Heart left ventricle (tissue), 16 donors: ENCODE measurements at regions of chr11 and their contacts with region 1.

Region 1: GRCh38 chr11:76670485-76671236 is at the start of gene LRRC32:
- DNase-seq: peak; percentile 78 to 88 (median 84)
- ATAC-seq: peak; percentile 27 to 69 (median 60)
- H3K4me3 ChIP-seq: peak within 1 kb of the TSS; percentile 49 to 87 (median 76)
- H3K27ac ChIP-seq: peak within 1 kb of the TSS; percentile 78 to 95 (median 90)
- H3K4me1 ChIP-seq: peaks cover 0 to 61% (median 41%) of the 10 kb centered on the region in 12 donors
- H3K27me3 ChIP-seq: peaks cover 0 to 12% (median 0%) of the 10 kb centered on the region in 9 donors
- CTCF ChIP-seq: peak in 7 of 12 donors; percentile 8 to 32 (median 17)
- POLR2A ChIP-seq: peak in 1 of 2 donors; percentile 60
- total RNA-seq, gene LRRC32: 20.1 to 67.1 (median 26.9) TPM

Region 2: DNA sequence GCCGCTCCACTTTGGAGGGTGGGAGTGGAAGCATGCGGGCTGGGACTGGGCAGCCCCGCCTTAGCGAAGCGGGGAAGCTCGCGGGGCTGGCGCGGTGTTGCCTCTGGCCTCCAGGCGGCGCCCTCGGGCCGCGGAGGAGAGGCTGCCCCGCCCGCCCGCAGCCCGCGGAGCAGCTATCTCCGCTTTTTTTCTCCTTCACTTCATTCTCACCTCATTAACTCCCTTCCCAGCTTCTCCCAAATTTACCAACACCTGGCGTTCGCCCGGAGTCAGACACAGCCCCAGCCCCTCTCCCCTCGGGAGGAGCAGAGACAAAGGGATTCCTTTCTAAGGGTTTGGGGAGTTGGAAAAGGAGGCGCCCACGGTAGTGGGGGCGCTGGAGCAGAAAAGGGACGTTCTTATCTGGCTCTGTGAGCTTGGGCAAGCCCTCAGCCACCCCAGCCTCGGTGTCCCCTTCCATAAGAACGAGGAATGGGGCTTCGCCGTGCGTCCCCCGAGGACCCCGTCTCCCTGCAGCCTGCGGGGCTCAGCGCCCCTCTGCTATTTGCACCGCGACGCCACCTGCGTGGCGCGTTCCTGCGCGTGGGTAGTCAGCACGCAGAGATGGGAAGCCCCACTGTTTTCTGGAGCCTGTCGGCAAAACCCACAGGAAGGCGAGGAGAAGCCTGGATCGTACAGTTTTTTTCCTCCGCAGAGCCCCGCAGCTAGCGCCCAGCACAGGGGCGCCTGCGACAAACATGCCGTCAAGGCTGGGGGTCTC is 462.8 kb before region 1 on chr11:
- intact Hi-C with region 1: loop called in 1 of 10 experiments (anchors 5 kb)
- DNase-seq: peak; percentile 79 to 91 (median 84)
- ATAC-seq: peak; percentile 61 to 80 (median 71)
- H3K4me3 ChIP-seq: peak overlapping the region; percentile 45 to 82 (median 68)
- H3K27ac ChIP-seq: peak overlapping the region in 8 of 12 donors; percentile 55 to 84 (median 75)
- H3K4me1 ChIP-seq: peaks cover 0 to 61% (median 34%) of the 10 kb centered on the region in 12 donors
- H3K27me3 ChIP-seq: peaks cover 0 to 75% (median 0%) of the 10 kb centered on the region in 9 donors
- CTCF ChIP-seq: peak; percentile 96 to 99 (median 98)
- POLR2A ChIP-seq: no peak

Region 3: GRCh38 chr11:76453248-76453647 is 217.4 kb before region 1 on chr11:
- intact Hi-C with region 1: loop called in 2 of 10 experiments (anchors 5 kb)
- DNase-seq: no peak
- ATAC-seq: no peak
- H3K4me3 ChIP-seq: no peak overlapping the region
- H3K27ac ChIP-seq: no peak overlapping the region
- H3K4me1 ChIP-seq: no peaks in the 10 kb centered on the region
- H3K27me3 ChIP-seq: no peaks in the 10 kb centered on the region
- CTCF ChIP-seq: no peak
- POLR2A ChIP-seq: no peak

Region 4: DNA sequence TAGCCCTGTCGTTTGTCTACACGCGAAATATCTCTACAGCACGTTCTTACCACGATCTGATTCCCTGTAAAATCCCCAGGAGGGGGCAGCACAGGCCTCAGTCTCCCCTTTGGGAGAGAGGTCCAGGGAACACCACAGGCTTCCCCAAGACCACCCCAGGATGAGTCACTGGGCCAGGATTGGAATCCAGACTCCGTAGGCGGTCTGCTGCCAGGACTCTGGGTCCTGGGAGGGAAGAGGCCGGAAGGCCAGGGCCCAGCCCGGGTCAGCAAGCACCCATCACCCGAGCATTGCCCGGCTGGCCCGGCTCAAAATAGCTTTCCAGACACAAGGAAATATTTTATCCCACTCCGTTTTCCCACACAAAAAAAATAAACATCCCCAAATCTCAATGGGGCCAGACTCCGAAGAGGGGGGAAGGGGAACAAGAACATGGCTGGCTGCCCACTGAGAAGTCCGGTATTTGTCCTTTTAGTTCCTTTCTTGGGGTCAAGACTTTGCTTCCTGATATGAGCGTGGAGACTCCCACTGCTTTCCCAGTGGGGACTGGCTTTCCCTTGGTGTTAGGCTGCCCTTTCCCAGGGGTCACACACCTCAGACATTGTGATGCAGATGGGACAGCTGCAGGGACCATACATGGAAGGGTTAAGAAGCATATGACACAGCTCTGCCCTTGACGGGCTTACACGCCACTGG is 91.5 kb before region 1 on chr11:
- intact Hi-C with region 1: loop called in 1 of 10 experiments (anchors 2 kb)
- DNase-seq: peak; percentile 74 to 85 (median 82)
- ATAC-seq: peak; percentile 35 to 75 (median 68)
- H3K4me3 ChIP-seq: peak overlapping the region in 8 of 12 donors; percentile 2 to 22 (median 10)
- H3K27ac ChIP-seq: peak overlapping the region; percentile 71 to 94 (median 86)
- H3K4me1 ChIP-seq: peaks cover 19 to 45% (median 31%) of the 10 kb centered on the region in 12 donors
- H3K27me3 ChIP-seq: no peaks in the 10 kb centered on the region
- CTCF ChIP-seq: peak in 11 of 12 donors; percentile 5 to 62 (median 45)
- POLR2A ChIP-seq: no peak

Region 5: DNA sequence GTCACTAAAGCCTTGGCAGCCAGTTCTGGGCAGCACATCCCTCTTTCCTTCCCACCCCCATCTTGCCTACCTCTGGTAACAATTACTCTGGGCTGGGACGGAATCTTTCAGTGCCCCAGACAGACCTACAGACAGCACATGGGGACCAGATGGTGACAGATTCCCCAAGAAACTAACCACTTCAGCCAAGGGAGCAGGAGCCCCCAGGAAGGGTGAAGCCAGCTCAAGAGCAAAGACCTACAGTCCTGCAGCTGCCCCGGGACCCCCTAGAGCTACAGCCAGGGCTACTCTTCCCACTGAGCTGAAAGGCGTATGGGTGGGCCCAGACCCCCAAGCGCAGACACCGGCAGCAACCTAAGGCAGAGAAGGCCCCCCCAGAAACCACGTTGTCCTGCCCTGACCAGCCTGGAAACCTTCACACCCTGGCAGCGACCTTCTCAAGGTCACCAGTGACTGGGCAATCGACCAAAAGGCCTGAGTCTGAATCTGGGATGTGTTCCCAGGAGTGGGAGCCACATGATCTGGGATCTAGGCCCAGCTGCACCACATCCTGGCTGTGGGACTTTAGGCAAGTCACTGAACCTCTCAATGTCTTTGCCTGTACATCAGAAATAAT is 65.9 kb before region 1 on chr11:
- intact Hi-C with region 1: loop called in 2 of 10 experiments (anchors 2 to 5 kb)
- DNase-seq: peak; percentile 78 to 87 (median 80)
- ATAC-seq: peak; percentile 65 to 82 (median 74)
- H3K4me3 ChIP-seq: no peak overlapping the region
- H3K27ac ChIP-seq: peak overlapping the region in 11 of 12 donors; percentile 17 to 85 (median 72)
- H3K4me1 ChIP-seq: peaks cover 11 to 55% (median 39%) of the 10 kb centered on the region in 12 donors
- H3K27me3 ChIP-seq: no peaks in the 10 kb centered on the region
- CTCF ChIP-seq: no peak
- POLR2A ChIP-seq: no peak

Region 6: GRCh38 chr11:76629853-76630599 is 40.6 kb before region 1 on chr11:
- intact Hi-C with region 1: loop called in 3 of 10 experiments (anchors 5 kb)
- DNase-seq: peak; percentile 82 to 87 (median 84)
- ATAC-seq: peak; percentile 63 to 88 (median 84)
- H3K4me3 ChIP-seq: peak overlapping the region in 3 of 12 donors; percentile 0 to 19 (median 10)
- H3K27ac ChIP-seq: peak overlapping the region; percentile 79 to 96 (median 90)
- H3K4me1 ChIP-seq: peaks cover 0 to 53% (median 24%) of the 10 kb centered on the region in 12 donors
- H3K27me3 ChIP-seq: no peaks in the 10 kb centered on the region
- CTCF ChIP-seq: peak in 7 of 12 donors; percentile 5 to 52 (median 22)
- POLR2A ChIP-seq: no peak